ENCODE measurements at regions of chr2 and their contacts with region 1.

Region 1: DNA sequence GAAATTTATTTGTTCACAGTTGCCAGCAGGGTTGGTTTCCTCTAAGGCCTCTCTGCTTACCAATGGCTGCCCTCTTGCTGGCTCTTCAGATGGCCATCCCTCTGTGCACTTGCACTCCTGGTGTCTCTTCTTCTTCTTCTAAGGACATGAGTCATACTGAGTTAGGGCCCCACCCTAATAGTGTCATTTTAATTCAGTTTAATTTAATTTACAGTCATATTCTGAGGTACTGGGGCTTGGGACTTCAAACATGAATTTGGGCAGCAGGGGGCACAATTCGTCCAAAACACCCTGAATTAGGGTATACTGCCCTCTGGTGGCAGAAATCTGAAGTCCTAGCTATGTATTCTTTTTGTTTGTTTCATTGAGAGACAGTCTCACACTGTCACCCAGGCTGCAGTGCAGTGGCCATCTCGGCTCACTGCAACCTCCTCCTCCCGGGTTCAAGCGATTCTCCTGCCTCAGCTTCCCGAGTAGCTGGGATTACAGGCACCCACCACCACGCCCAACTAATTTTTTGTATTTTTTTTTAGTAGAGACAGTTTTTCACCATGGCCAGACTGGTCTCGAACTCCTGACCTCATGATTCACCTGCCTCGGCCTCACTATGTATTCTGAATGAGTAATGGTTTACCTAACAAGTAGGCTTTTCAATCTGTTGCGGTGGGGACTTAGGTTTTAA is 19.8 kb downstream of the SLC4A1AP start:
- DNase-seq: peak; percentile 96
- H3K4me3 Mint-ChIP-seq: no peak overlapping the region
- H3K27ac Mint-ChIP-seq: peak overlapping the region; percentile 87
- H3K4me1 Mint-ChIP-seq: peaks cover 25% of the 10 kb centered on the region
- H3K27me3 Mint-ChIP-seq: no peaks in the 10 kb centered on the region

Region 2: DNA sequence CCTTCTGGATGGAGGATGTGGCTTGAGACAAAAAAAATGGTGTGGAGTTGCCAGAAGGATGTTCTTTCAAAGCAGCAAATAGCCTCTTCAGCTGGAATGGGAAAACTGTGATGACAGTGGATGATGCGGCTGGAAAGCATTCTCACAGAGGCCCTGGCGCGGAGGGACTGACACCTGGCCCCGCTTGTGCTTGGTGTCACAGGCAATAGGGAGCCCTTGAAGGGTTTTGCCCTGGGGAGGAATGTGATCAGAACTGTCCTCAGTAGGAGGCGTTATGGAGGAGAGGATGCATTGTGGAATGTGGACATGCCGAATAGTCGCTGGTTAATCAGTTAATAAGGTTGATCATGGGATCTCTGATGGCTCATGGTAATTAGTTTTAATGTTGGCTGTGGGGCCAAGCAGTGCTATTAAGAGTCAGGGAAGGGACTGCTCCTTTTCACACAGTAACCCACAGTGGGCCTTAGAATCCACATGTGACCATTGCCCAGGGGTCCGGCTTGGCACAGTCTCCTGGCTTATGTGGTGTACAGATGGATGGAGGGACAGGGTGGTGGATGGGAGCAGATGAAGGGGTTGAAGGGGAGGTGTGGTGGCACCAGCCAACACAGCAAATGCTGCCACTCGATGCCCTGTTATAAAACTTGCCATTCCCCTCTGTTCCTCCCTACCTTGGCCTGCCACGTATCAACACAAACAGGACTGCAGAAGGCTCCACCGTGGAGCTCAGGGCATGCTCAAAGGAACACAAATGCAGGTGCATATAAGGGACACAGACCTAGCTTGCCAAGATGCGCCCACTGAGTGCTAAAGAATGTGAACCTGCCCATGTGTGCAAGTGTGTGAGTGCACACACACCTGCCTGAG is 1114.1 kb before region 1 on chr2:
- CTCF ChIA-PET with region 1: no interaction called
- intact Hi-C with region 1: no loop called
- DNase-seq: no peak
- H3K4me3 Mint-ChIP-seq: no peak overlapping the region
- H3K27ac Mint-ChIP-seq: no peak overlapping the region
- H3K4me1 Mint-ChIP-seq: no peaks in the 10 kb centered on the region
- H3K27me3 Mint-ChIP-seq: peaks cover 4% of the 10 kb centered on the region

Region 3: GRCh38 chr2:27218614-27219013 is 464.9 kb before region 1 on chr2:
- CTCF ChIA-PET with region 1: no interaction called
- intact Hi-C with region 1: no loop called
- DNase-seq: no peak
- H3K4me3 Mint-ChIP-seq: peak overlapping the region; percentile 97
- H3K27ac Mint-ChIP-seq: no peak overlapping the region
- H3K4me1 Mint-ChIP-seq: peaks cover 40% of the 10 kb centered on the region
- H3K27me3 Mint-ChIP-seq: no peaks in the 10 kb centered on the region

Region 4: GRCh38 chr2:27303093-27304025 is 380.2 kb before region 1 on chr2:
- CTCF ChIA-PET with region 1: interaction called, 4 read pairs
- intact Hi-C with region 1: loop called (anchors 1 kb)
- DNase-seq: peak; percentile 70
- H3K4me3 Mint-ChIP-seq: peak overlapping the region; percentile 56
- H3K27ac Mint-ChIP-seq: no peak overlapping the region
- H3K4me1 Mint-ChIP-seq: peaks cover 12% of the 10 kb centered on the region
- H3K27me3 Mint-ChIP-seq: peaks cover 12% of the 10 kb centered on the region

Region 5: GRCh38 chr2:27380626-27381545 is 302.6 kb before region 1 on chr2 and contains the start of gene ZNF513:
- CTCF ChIA-PET with region 1: interaction called, 11 read pairs
- intact Hi-C with region 1: no loop called
- DNase-seq: peak; percentile 93
- H3K4me3 Mint-ChIP-seq: peak within 1 kb of the TSS; percentile 79
- H3K27ac Mint-ChIP-seq: peak within 1 kb of the TSS; percentile 86
- H3K4me1 Mint-ChIP-seq: peaks cover 30% of the 10 kb centered on the region
- H3K27me3 Mint-ChIP-seq: no peaks in the 10 kb centered on the region
- total RNA-seq, gene ZNF513: 4.9 to 5.2 TPM

Region 6: GRCh38 chr2:27446057-27446456 is 237.5 kb before region 1 on chr2:
- CTCF ChIA-PET with region 1: interaction called, 12 read pairs
- intact Hi-C with region 1: no loop called
- DNase-seq: peak; percentile 55
- H3K4me3 Mint-ChIP-seq: no peak overlapping the region
- H3K27ac Mint-ChIP-seq: peak overlapping the region; percentile 47
- H3K4me1 Mint-ChIP-seq: peaks cover 9% of the 10 kb centered on the region
- H3K27me3 Mint-ChIP-seq: no peaks in the 10 kb centered on the region

Region 7: DNA sequence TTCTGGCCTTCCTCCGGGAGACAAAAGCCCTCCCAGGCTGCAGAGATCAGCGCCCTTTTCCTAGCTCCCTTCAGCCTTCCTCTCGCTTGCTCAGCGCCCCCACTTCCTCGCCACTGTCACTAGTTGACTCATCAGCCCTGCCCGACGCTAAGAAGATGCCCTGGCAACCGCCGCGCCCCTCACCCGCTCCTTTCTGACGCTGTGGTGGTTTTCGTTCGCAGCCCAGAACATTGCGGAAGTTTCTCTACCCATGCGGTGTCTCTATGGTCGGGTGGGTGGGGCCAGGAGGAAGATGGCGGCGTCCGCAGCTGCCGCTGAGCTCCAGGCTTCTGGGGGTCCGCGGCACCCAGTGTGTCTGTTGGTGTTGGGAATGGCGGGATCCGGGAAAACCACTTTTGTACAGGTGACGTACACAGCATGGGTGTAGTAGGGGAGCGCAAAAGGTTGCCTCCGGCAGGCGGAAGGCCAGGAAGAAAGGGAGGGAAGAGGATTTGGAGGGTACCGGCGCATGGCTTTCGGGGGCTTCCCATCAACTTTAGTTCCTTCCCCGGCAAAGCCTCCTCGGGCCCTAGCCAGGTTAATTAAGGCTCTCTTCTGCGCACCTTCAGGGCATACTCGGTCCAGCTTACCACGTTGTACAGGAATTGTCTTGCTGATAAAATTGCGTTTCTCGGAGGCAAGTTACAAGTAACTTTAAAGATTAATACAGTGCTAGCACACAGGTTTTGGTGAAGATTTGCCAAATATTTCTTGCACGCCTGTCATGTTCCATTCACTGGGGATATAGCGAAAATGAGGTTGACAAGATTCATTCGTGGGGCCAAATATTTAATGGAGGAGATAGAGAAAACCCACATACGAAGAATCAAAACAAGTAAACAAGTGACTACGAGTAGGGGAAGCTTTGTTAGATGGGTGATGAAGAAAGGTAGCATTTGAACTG is 54.5 kb before region 1 on chr2 and contains the starts of genes CCDC121 and GPN1:
- CTCF ChIA-PET with region 1: interaction called, 13 read pairs
- intact Hi-C with region 1: loop called (anchors 2 kb)
- DNase-seq: peak; percentile 98
- H3K4me3 Mint-ChIP-seq: no peak within 1 kb of the TSS
- H3K27ac Mint-ChIP-seq: peak within 1 kb of the TSS; percentile 52
- H3K4me1 Mint-ChIP-seq: peaks cover 13% of the 10 kb centered on the region
- H3K27me3 Mint-ChIP-seq: no peaks in the 10 kb centered on the region
- total RNA-seq, gene CCDC121: 0.17 to 0.30 TPM
- total RNA-seq, gene GPN1: 44.9 to 45.1 TPM

Region 8: DNA sequence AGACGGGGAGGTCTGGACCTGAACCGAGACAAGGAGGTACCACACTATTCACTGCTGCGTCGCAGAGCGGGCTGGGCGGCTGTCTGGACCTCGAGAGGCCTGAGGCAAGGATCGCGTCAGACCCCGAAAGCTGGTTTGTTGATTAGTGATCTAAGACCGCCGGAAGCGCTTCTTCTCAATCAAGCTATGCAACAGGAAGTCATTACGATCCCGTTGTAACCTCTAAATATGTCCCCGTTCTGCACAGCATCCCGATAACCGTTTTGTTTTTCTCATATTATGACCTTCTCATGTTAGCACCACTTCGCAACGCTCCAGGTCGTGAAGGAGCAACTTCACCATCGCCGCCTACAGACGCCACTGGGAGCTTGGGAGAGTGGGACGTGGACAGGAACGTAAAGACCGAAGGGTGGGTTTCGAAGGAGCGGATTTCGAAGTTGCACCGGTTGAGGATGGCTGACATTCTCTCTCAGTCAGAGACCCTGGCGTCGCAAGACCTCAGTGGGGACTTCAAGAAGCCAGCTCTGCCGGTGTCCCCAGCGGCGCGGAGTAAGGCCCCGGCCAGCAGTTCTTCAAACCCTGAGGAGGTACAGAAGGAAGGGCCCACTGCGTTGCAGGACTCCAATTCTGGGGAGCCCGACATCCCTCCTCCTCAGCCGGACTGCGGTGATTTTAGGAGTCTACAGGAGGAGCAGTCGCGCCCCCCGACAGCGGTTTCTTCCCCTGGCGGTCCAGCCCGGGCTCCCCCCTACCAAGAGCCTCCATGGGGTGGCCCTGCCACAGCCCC is 19.9 kb before region 1 on chr2 and contains the starts of genes SLC4A1AP and SUPT7L:
- CTCF ChIA-PET with region 1: interaction called, 12 read pairs
- intact Hi-C with region 1: loop called (anchors 1 kb)
- DNase-seq: peak; percentile 76
- H3K4me3 Mint-ChIP-seq: peak within 1 kb of the TSS; percentile 98
- H3K27ac Mint-ChIP-seq: peak within 1 kb of the TSS; percentile 99
- H3K4me1 Mint-ChIP-seq: peaks cover 47% of the 10 kb centered on the region
- H3K27me3 Mint-ChIP-seq: no peaks in the 10 kb centered on the region
- total RNA-seq, gene SLC4A1AP: 21.2 to 22.2 TPM
- total RNA-seq, gene SUPT7L: 27.8 to 29.7 TPM